ENCODE measurements at regions of chr20 and their contacts with region 1.

Region 1: GRCh38 chr20:16761305-16761829 is 13.2 kb downstream of the OTOR start:
- DNase-seq: peak; percentile 56
- ATAC-seq: peak; percentile 61
- H3K4me3 Mint-ChIP-seq: no peak overlapping the region
- H3K27ac Mint-ChIP-seq: no peak overlapping the region
- H3K4me1 Mint-ChIP-seq: no peaks in the 10 kb centered on the region
- H3K27me3 Mint-ChIP-seq: peaks cover 8% of the 10 kb centered on the region
- CTCF ChIP-seq: peak; percentile 67

Region 2: GRCh38 chr20:16517946-16518783 is 243.2 kb before region 1 on chr20:
- CTCF ChIA-PET with region 1: interaction called, 5 read pairs
- POLR2A ChIA-PET with region 1: no interaction called
- intact Hi-C with region 1: loop called (anchors 5 kb)
- DNase-seq: peak; percentile 30
- ATAC-seq: no peak
- H3K4me3 Mint-ChIP-seq: no peak overlapping the region
- H3K27ac Mint-ChIP-seq: no peak overlapping the region
- H3K4me1 Mint-ChIP-seq: no peaks in the 10 kb centered on the region
- H3K27me3 Mint-ChIP-seq: no peaks in the 10 kb centered on the region
- CTCF ChIP-seq: peak; percentile 56

Region 3: DNA sequence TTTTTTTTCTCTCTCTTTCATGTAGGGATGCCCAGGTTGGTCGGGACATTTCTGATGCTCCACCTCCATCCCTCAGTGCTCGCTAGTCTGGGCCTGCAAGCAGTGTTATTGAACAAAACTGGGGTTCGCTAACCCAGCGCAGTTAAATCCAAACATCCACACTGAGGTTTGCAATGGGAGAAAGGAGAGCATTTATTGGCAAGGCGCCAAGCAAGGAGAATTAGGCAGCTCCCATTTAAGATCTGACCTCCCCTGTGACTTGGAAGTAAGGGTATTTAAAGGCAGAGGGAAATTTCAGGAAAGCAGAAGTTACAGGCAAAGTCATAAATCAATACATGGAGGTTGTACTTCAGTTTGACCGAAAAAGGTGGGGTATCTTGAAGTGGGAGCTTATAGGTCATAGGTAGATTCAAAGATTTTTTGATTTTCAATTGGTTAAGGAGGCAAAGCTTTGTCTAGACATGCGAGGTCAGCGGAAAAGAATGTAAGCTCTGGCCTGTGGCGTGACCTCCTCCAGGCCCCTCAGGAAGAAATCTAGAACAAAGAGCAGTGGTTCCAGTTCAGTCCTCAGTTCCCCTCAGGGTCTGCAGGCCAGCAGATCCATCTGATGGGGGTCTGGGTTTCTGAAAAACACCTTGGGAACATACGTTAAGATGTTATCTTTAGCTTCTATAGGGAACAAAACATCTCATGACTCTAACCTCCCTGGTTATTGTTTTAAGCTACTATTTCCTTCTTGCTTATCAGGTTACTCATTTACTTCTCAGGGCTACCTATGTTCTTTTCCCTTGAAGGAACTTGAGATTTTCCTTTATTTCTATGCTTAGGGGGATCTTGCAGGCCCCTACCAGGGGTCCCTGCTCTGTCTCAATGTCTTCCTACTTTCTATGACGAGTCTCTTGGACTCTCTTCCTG is 122.1 kb before region 1 on chr20:
- CTCF ChIA-PET with region 1: no interaction called
- POLR2A ChIA-PET with region 1: no interaction called
- intact Hi-C with region 1: no loop called
- DNase-seq: no peak
- ATAC-seq: no peak
- H3K4me3 Mint-ChIP-seq: no peak overlapping the region
- H3K27ac Mint-ChIP-seq: no peak overlapping the region
- H3K4me1 Mint-ChIP-seq: no peaks in the 10 kb centered on the region
- H3K27me3 Mint-ChIP-seq: peaks cover 2% of the 10 kb centered on the region
- CTCF ChIP-seq: no peak

Region 4: DNA sequence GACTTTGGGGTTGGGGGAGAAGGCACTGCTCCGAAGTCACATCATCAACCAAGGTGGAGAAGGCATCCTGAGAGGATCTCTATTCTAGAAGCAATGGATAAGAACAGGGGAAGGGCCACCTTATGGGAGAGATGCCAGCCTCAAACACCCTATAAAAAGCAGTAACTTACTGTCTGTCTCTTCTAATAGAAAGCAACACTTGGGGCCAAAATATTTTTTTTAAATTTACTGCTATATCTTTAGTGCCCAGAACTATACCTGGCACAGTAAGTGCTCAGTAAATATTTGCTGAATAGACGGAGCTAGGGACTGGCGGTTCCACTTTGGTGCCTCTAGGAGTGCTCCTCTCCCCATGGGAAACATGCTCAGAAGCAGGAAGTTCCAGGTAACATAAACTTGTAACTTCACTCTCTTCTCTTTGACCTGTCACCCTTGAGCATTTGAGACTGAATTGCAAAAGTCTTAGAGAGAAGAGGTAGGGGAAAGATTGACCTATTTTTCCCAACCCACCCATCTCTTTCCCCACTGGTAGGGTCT is 14.0 kb before region 1 on chr20:
- CTCF ChIA-PET with region 1: interaction called, 10 read pairs
- POLR2A ChIA-PET with region 1: no interaction called
- intact Hi-C with region 1: no loop called
- DNase-seq: no peak
- ATAC-seq: no peak
- H3K4me3 Mint-ChIP-seq: no peak overlapping the region
- H3K27ac Mint-ChIP-seq: no peak overlapping the region
- H3K4me1 Mint-ChIP-seq: peaks cover 2% of the 10 kb centered on the region
- H3K27me3 Mint-ChIP-seq: peaks cover 8% of the 10 kb centered on the region
- CTCF ChIP-seq: no peak

Measured in activated CD8-positive, alpha-beta T cell treated with anti-CD3 and anti-CD28 coated beads for 36 hours (primary cell).